AG04450 (cell line): ENCODE measurements at regions of chr9 and their contacts with region 1.

Region 1: DNA sequence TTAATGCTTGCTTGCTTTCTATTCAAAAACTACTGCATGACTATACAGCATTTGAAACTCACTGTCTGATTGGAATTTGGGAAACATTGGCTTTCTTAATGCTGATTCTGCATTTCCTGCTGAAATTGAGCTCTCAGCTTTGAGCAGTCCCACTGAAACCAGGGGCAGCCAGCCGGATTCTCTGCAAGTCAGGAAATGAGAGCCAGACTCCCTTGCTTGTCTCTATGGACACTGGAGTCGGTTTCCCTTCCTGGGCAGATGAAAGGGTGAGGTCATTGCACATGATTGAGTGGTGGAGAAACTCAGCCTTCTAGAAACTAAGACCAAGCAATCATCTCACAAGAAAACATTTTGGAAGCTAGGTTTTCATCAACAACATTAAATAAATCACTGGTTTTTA is 119.8 kb upstream of the SPATA31C2 start:
- DNase-seq: no peak
- H3K4me3 ChIP-seq: no peak overlapping the region
- H3K27ac ChIP-seq: no peak overlapping the region
- H3K27me3 ChIP-seq: no peaks in the 10 kb centered on the region
- CTCF ChIP-seq: no peak

Region 2: DNA sequence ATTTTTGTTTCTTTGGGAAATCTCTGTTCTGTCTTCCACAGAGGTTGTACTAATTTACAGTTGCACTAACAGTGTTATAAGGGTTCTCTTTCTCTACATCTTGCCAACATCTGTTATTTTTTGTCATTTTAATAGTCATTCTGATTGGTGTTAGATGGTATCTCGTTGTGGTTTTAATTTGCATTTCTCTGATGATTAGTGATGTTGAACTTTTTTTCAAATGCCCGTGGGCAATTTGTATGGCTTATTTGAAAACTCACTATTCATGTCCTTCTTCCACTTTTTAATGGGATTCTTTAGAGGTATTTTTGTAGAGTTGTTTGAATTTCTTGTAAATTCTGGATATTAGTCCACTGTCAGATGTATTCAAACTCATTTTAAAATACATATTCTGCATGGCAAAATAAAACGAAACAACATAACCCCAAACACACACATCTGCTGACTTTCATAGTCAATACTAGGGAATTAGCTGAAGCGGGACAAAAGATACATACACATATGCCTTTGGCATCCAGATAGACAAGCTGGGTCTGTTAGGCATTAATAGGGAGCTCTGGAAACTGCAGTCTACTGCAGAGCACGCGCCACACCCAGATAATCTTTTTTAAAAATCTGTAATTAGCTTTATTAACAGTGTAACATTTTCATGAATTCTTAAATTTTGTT is 113.9 kb before region 1 on chr9:
- CTCF ChIA-PET with region 1: interaction called, 10 read pairs
- POLR2A ChIA-PET with region 1: no interaction called
- DNase-seq: no peak
- H3K4me3 ChIP-seq: no peak overlapping the region
- H3K27ac ChIP-seq: no peak overlapping the region
- H3K27me3 ChIP-seq: peaks cover 2% of the 10 kb centered on the region
- CTCF ChIP-seq: no peak